ENCODE measurements at regions of chr11 and their contacts with region 1.

Region 1: GRCh38 chr11:91446267-91446666 is 778.4 kb upstream of the FAT3 start:
- DNase-seq: no peak
- ATAC-seq: no peak
- H3K4me3 ChIP-seq: no peak overlapping the region
- H3K27ac ChIP-seq: no peak overlapping the region
- H3K4me1 ChIP-seq: no peaks in the 10 kb centered on the region
- H3K27me3 ChIP-seq: no peaks in the 10 kb centered on the region
- CTCF ChIP-seq: no peak
- POLR2A ChIP-seq: no peak
- RAD21 ChIP-seq: no peak

Region 2: GRCh38 chr11:91406009-91406408 is 40.3 kb before region 1 on chr11:
- CTCF ChIA-PET with region 1: no interaction called
- POLR2A ChIA-PET with region 1: no interaction called
- RAD21 ChIA-PET with region 1: no interaction called
- intact Hi-C with region 1: loop called (anchors 1 kb)
- DNase-seq: no peak
- ATAC-seq: no peak
- H3K4me3 ChIP-seq: no peak overlapping the region
- H3K27ac ChIP-seq: no peak overlapping the region
- H3K4me1 ChIP-seq: no peaks in the 10 kb centered on the region
- H3K27me3 ChIP-seq: no peaks in the 10 kb centered on the region
- CTCF ChIP-seq: no peak
- POLR2A ChIP-seq: no peak
- RAD21 ChIP-seq: no peak

Region 3: GRCh38 chr11:91470656-91471055 is 24.4 kb after region 1 on chr11:
- CTCF ChIA-PET with region 1: no interaction called
- POLR2A ChIA-PET with region 1: no interaction called
- RAD21 ChIA-PET with region 1: no interaction called
- intact Hi-C with region 1: no loop called
- DNase-seq: no peak
- ATAC-seq: no peak
- H3K4me3 ChIP-seq: no peak overlapping the region
- H3K27ac ChIP-seq: no peak overlapping the region
- H3K4me1 ChIP-seq: no peaks in the 10 kb centered on the region
- H3K27me3 ChIP-seq: no peaks in the 10 kb centered on the region
- CTCF ChIP-seq: no peak
- POLR2A ChIP-seq: no peak
- RAD21 ChIP-seq: no peak

Region 4: DNA sequence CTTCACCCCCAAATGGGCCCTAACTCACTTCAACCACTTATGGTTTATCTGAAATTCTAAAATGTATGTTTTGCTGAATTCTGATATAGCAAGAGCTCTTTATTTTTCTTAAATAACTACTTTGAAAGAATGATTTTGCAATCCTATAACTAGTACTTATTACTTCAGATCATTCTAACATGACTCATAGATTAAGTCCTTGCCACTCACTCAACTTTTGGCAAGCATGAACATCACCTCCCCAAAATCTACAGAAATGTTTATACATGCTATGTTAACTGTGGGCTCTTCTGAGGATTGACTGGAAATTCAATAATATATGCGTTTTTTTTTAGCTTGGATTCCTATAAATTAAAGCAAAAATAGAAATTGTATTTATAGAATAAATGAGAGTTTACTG is 410.9 kb after region 1 on chr11:
- CTCF ChIA-PET with region 1: no interaction called
- POLR2A ChIA-PET with region 1: no interaction called
- RAD21 ChIA-PET with region 1: no interaction called
- intact Hi-C with region 1: no loop called
- DNase-seq: no peak
- ATAC-seq: no peak
- H3K4me3 ChIP-seq: no peak overlapping the region
- H3K27ac ChIP-seq: no peak overlapping the region
- H3K4me1 ChIP-seq: no peaks in the 10 kb centered on the region
- H3K27me3 ChIP-seq: no peaks in the 10 kb centered on the region
- CTCF ChIP-seq: no peak
- POLR2A ChIP-seq: no peak
- RAD21 ChIP-seq: no peak